ENCODE measurements at regions of chr7 and their contacts with region 1.

Region 1: GRCh38 chr7:135801045-135801693 is 52.6 kb upstream of the FAM180A start:
- DNase-seq: no peak

Region 2: GRCh38 chr7:136009488-136010079 is 208.4 kb after region 1 on chr7:
- intact Hi-C with region 1: loop called (anchors 1 kb)
- DNase-seq: no peak

Region 3: GRCh38 chr7:137592232-137592896 is 1791.2 kb after region 1 on chr7:
- intact Hi-C with region 1: loop called (anchors 5 kb)
- DNase-seq: peak; percentile 49 to 95 (median 71)

Measured in posterior cingulate gyrus (tissue), 11 donors.